Activated naive CD4-positive, alpha-beta T cell treated with anti-CD3 and anti-CD28 coated beads for 36 hours (primary cell): ENCODE measurements at regions of chr9 and their contacts with region 1.

Region 1: GRCh38 chr9:112333639-112334431 is 416 bp upstream of the PTBP3 start:
- DNase-seq: peak; percentile 93
- H3K4me3 Mint-ChIP-seq: peak overlapping the region; percentile 90
- H3K27ac Mint-ChIP-seq: peak overlapping the region; percentile 95
- H3K4me1 Mint-ChIP-seq: peaks cover 21% of the 10 kb centered on the region
- H3K27me3 Mint-ChIP-seq: no peaks in the 10 kb centered on the region

Region 2: DNA sequence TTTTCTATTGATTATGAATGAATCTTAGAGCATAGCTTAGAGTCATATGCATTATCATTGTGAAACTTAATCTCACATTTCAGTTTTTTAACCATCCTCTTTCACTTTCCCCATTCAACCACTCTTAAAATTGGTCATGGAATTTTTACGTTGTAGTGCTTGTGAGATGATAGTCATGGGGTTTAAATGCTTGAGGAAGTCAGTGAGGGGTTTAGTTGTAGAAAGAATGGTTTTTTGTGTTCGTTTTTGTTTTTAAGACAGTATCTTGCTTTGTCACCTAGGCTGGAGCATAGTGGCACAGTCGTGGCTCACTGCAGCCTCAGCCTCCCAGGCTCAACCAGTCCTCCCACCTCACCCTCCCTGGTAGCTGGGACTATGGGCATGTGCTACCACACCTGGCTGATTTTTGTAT is 417.6 kb before region 1 on chr9:
- CTCF ChIA-PET with region 1: interaction called, 3 read pairs
- intact Hi-C with region 1: loop called (anchors 1 kb)
- DNase-seq: peak; percentile 45
- H3K4me3 Mint-ChIP-seq: no peak overlapping the region
- H3K27ac Mint-ChIP-seq: peak overlapping the region; percentile 81
- H3K4me1 Mint-ChIP-seq: peaks cover 53% of the 10 kb centered on the region
- H3K27me3 Mint-ChIP-seq: no peaks in the 10 kb centered on the region

Region 3: GRCh38 chr9:112112941-112113681 is 220.7 kb before region 1 on chr9:
- CTCF ChIA-PET with region 1: interaction called, 4 read pairs
- intact Hi-C with region 1: loop called (anchors 1 kb)
- DNase-seq: peak; percentile 45
- H3K4me3 Mint-ChIP-seq: no peak overlapping the region
- H3K27ac Mint-ChIP-seq: no peak overlapping the region
- H3K4me1 Mint-ChIP-seq: no peaks in the 10 kb centered on the region
- H3K27me3 Mint-ChIP-seq: no peaks in the 10 kb centered on the region

Region 4: DNA sequence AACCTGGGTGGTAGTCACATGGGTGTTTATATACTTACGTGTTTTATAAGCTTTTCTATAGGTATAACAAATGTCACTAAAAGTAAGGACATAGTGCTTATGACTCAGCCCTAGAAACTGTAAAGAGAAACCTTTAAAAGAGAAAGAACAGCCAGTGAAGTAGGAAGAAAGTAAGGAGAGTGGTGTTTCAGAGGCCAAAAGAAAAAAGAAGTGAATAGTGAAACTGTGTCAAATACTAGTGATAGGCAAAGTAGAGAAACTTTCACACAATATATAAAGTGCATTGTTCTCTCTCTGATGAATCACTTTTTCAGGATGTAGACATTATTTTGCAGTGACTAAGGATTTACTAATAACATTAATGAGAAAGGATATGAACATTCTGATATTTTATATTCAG is 84.6 kb before region 1 on chr9:
- CTCF ChIA-PET with region 1: interaction called, 3 read pairs
- intact Hi-C with region 1: loop called (anchors 2 kb)
- DNase-seq: no peak
- H3K4me3 Mint-ChIP-seq: no peak overlapping the region
- H3K27ac Mint-ChIP-seq: no peak overlapping the region
- H3K4me1 Mint-ChIP-seq: peaks cover 23% of the 10 kb centered on the region
- H3K27me3 Mint-ChIP-seq: no peaks in the 10 kb centered on the region

Region 5: GRCh38 chr9:112379177-112380101 is 45.6 kb after region 1 on chr9:
- CTCF ChIA-PET with region 1: interaction called, 5 read pairs
- intact Hi-C with region 1: loop called (anchors 1 kb)
- DNase-seq: peak; percentile 99
- H3K4me3 Mint-ChIP-seq: peak overlapping the region; percentile 100
- H3K27ac Mint-ChIP-seq: peak overlapping the region; percentile 99
- H3K4me1 Mint-ChIP-seq: peaks cover 39% of the 10 kb centered on the region
- H3K27me3 Mint-ChIP-seq: no peaks in the 10 kb centered on the region

Region 6: DNA sequence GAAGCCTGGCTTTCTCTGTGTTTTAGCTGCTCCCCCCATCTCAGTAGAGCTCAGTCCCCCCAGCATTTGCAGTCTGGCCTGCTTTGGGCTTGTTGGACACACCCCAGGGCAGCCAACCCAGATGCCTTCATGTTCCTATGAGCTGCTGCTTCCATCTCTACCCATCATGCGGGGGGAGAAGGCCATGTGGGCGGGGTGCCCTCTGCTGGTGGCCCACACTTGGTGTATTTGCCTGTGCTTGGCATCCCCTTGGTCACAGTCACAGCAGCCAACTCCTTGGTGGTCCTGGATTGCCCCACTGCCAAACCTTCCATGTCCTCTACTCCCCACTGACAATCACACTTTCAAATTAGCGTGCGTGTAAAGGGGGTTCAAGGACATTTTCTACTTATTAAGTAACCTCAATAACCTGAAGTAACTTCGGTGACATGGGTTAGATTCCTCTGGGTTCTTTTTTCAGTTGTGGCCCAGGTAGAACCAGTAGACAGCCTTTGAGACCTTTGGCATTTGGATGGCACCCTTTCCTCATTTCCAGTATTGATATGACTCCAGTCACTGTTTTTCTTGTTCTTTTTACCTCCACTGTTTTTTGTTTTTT is 459.5 kb after region 1 on chr9:
- CTCF ChIA-PET with region 1: no interaction called
- intact Hi-C with region 1: loop called (anchors 1 kb)
- DNase-seq: peak; percentile 93
- H3K4me3 Mint-ChIP-seq: no peak overlapping the region
- H3K27ac Mint-ChIP-seq: no peak overlapping the region
- H3K4me1 Mint-ChIP-seq: peaks cover 7% of the 10 kb centered on the region
- H3K27me3 Mint-ChIP-seq: no peaks in the 10 kb centered on the region